SK-N-SH (cell line): ENCODE measurements at regions of chr10 and their contacts with region 1.

Region 1: GRCh38 chr10:60208676-60209269 is 180.9 kb downstream of the ANK3 start:
- DNase-seq: peak; percentile 22
- H3K4me3 ChIP-seq: no peak overlapping the region
- H3K27ac ChIP-seq: no peak overlapping the region
- H3K4me1 ChIP-seq: no peaks in the 10 kb centered on the region
- H3K27me3 ChIP-seq: no peaks in the 10 kb centered on the region
- CTCF ChIP-seq: peak; percentile 85
- EP300 ChIP-seq: no peak
- RAD21 ChIP-seq: peak; percentile 93

Region 2: DNA sequence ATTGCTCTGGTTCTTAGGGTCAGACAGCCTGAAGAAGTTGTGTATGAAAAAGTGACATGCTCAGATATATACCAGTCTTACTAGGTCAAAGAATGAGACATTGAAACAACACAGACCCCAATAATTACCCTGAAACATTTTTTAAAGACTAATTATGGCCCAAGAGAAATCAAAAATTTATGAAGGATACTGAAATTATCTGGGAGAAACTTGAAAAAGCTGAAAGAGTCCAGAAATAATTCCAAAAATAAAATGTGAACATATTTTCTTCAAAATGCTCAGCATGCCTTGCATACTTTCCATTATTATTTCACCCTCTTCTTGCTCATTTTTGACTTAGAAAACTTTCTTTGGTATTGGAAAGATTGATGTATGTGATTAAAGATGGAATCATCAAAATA is 103.5 kb before region 1 on chr10:
- CTCF ChIA-PET with region 1: interaction called, 99 read pairs
- POLR2A ChIA-PET with region 1: no interaction called
- DNase-seq: no peak
- H3K4me3 ChIP-seq: no peak overlapping the region
- H3K27ac ChIP-seq: peak overlapping the region; percentile 22 to 83; a peak in 2 of 4 replicates
- H3K4me1 ChIP-seq: no peaks in the 10 kb centered on the region; a peak in 1 of 4 replicates
- H3K27me3 ChIP-seq: no peaks in the 10 kb centered on the region
- CTCF ChIP-seq: no peak
- EP300 ChIP-seq: 0 out of 4 replicates have a peak, but pooled peaks of 1 of the 2 experiments have one; percentile 13
- RAD21 ChIP-seq: no peak

Region 3: GRCh38 chr10:60197206-60197605 is 11.6 kb before region 1 on chr10:
- CTCF ChIA-PET with region 1: interaction called, 17 read pairs
- POLR2A ChIA-PET with region 1: no interaction called
- DNase-seq: no peak
- H3K4me3 ChIP-seq: no peak overlapping the region
- H3K27ac ChIP-seq: no peak overlapping the region
- H3K4me1 ChIP-seq: peaks cover 0 to 9% of the 10 kb centered on the region in 2 experiments; a peak in 2 of 4 replicates
- H3K27me3 ChIP-seq: no peaks in the 10 kb centered on the region
- CTCF ChIP-seq: no peak
- EP300 ChIP-seq: no peak
- RAD21 ChIP-seq: no peak

Region 4: DNA sequence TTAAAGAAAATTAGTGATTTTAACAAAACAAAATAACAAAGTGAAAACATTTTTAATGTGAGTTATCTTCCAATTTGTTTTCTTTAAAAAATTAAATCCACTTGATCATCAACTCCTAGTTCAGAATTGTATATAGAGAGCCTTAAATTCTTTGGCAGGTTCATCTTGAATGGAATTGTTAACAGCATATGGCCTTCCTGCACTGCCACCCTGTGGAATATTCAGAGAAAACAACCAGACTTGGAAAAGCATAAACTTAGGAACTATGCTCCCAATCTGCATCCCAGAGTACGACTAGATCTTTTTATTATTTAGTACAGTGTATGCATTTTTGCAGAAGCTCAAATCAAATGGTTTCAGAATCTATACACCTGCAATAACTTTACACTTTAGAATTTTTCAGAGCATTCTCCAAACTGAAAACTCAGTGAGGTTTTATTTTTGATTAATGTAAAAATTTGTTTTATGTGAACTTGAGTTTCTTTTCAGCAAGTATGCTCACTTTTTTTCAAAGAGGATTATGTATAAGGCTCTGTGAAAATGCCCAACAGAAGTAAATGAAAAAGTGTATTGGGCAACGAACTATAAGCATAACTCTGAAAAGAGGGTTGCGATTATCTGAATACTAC is 225.8 kb after region 1 on chr10:
- CTCF ChIA-PET with region 1: interaction called, 76 read pairs
- POLR2A ChIA-PET with region 1: no interaction called
- DNase-seq: peak; percentile 61
- H3K4me3 ChIP-seq: no peak overlapping the region; a peak in 1 of 4 replicates
- H3K27ac ChIP-seq: peak overlapping the region; percentile 65 to 98; a peak in 3 of 4 replicates
- H3K4me1 ChIP-seq: peaks cover 7 to 39% of the 10 kb centered on the region in 2 experiments
- H3K27me3 ChIP-seq: no peaks in the 10 kb centered on the region
- CTCF ChIP-seq: peak; percentile 84
- EP300 ChIP-seq: no peak
- RAD21 ChIP-seq: peak; percentile 98